Ascending aorta (tissue), 2 donors: ENCODE measurements at regions of chr10 and their contacts with region 1.

Region 1: DNA sequence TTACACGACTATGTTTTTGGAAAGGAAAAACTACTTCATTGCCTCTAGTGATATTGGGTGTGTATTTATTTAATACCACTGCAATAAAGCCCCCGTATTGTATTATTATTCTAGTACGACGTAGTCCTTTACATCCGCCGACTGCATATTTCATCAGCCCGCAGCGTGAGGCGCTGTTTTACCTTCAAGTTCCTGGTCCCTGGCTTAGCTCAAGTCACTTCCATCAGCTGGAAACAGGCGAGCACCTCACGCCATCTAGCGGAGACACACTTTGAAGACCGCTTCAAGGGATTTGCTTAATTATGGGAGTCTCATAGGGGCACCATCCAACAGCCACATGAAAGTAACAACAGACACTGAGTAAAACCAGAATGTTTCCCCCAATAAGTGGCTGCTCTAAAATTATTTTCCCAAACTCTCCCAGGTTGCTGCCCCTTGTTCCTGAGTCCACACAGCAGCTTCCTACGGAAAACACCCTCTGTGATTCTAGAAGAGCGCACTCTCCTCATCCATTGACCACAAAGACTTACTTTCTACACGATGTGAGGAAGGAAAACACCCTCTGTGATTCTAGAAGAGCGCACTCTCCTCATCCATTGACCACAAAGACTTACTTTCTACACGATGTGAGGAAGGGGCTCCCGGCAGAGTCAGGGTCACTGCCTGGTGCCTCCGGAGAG is 15.7 kb upstream of the ITIH2 start:
- DNase-seq: peak; percentile 25 to 93
- H3K4me3 ChIP-seq: no peak overlapping the region
- H3K27ac ChIP-seq: no peak overlapping the region
- H3K4me1 ChIP-seq: no peaks in the 10 kb centered on the region
- H3K27me3 ChIP-seq: no peaks in the 10 kb centered on the region
- CTCF ChIP-seq: peak; percentile 84 to 95 (median 84)

Region 2: DNA sequence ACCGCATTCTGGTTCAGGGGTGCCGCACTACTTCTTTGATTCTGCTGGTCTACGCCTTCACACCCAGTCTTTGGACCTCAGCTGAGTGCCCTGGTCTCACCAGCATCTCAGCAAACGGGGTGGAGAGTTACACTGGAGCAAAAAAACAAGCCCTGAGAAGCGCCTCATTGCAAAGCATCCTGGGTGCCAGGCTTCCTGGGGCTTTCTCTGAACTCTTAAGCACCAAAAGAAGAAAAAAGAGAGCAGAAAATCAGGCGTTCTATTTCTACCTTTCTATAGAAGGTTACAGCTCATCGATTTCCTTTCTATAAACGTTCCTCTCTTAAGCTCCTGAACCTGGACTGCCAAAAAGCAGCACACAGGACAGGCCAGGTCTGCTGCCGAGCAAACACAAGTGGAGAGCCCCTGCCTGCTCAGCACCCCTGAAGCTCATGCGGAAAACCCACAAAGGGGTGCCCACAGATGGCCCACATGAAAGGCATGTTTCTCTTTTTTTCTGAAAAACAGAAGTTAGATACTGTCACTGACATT is 494.5 kb before region 1 on chr10:
- intact Hi-C with region 1: no loop called
- DNase-seq: no peak
- H3K4me3 ChIP-seq: no peak overlapping the region
- H3K27ac ChIP-seq: no peak overlapping the region
- H3K4me1 ChIP-seq: no peaks in the 10 kb centered on the region
- H3K27me3 ChIP-seq: no peaks in the 10 kb centered on the region
- CTCF ChIP-seq: no peak

Region 3: DNA sequence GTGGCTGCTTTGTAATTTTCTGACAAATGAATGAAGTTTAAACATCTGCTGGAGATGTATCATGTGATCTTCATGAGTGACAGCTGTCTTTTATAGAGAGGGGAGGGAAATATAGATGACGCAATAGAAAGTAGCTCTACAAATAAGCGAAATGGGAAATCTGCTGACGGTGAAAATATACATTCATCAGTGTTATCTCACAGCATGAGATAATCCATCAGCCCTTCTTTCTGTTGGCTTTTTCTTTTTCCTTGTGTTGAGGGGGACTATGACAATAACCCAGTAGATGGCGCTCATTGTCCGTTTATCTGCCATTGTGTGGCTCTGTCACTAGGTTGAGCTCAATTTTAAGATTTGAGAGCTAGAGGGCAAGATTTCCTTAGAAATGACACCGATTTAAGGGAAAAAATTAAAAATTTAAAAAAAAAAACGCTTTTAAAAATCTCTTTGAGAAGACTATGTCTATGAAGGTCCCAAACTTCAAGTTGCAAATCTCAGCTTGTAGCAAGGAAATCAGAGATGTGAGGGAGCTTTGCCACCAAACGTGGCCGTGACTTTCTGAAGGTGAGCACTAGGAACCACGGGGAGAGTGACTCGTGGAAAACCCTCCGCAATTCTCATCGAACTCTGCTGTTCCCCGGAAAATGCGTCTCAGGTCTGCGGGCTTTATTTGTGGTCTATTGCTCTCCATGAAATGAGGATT is 161.9 kb before region 1 on chr10:
- intact Hi-C with region 1: loop called (anchors 1 kb)
- DNase-seq: peak in 1 of 2 donors; percentile 74
- H3K4me3 ChIP-seq: no peak overlapping the region
- H3K27ac ChIP-seq: no peak overlapping the region
- H3K4me1 ChIP-seq: no peaks in the 10 kb centered on the region
- H3K27me3 ChIP-seq: no peaks in the 10 kb centered on the region
- CTCF ChIP-seq: peak; percentile 65 to 84 (median 81)

Region 4: GRCh38 chr10:7634142-7634894 is 53.0 kb before region 1 on chr10:
- intact Hi-C with region 1: loop called (anchors 5 kb)
- DNase-seq: no peak
- H3K4me3 ChIP-seq: no peak overlapping the region
- H3K27ac ChIP-seq: no peak overlapping the region
- H3K4me1 ChIP-seq: no peaks in the 10 kb centered on the region
- H3K27me3 ChIP-seq: no peaks in the 10 kb centered on the region
- CTCF ChIP-seq: no peak

Region 5: DNA sequence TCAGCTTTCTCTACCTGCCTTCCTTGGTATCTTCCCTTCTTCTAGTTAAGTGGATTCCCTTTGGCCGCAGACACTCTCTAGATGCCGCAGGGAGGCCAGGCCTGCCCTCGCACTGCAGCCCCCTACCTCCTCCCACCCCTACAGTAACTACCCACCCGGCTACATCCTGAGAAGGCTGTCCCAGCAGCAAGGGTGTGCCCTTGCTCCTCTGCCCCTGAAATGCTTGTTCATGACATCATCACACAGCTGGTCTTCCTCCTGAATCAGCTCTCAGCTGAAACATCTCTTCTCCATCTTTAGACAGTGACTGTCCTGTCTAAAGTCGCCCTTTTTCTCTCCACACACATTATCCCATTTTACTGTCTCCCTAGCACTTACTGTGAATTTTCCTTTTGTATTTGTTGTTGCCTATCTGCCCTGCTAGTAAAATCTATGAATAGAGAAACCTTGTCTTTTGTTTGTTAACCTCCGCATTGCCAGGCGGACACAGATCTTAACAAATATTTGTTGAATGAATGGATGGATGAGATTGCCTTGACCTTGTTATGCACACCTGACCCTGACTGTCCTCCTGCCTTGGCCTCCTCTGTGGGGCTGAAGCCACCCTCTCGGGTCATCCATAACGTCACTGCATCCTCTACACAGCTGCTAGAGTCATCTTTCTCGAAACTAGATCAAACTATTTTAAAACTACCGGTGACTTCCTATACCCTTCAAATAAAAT is 258.3 kb after region 1 on chr10:
- intact Hi-C with region 1: no loop called
- DNase-seq: no peak
- H3K4me3 ChIP-seq: no peak overlapping the region
- H3K27ac ChIP-seq: no peak overlapping the region
- H3K4me1 ChIP-seq: no peaks in the 10 kb centered on the region
- H3K27me3 ChIP-seq: no peaks in the 10 kb centered on the region
- CTCF ChIP-seq: no peak